AG04449 (cell line): ENCODE measurements at regions of chr14 and their contacts with region 1.

Region 1: GRCh38 chr14:71103662-71104484 is 196.6 kb downstream of the PCNX1 start:
- DNase-seq: no peak
- H3K4me3 ChIP-seq: no peak overlapping the region
- CTCF ChIP-seq: peak; percentile 66

Region 2: DNA sequence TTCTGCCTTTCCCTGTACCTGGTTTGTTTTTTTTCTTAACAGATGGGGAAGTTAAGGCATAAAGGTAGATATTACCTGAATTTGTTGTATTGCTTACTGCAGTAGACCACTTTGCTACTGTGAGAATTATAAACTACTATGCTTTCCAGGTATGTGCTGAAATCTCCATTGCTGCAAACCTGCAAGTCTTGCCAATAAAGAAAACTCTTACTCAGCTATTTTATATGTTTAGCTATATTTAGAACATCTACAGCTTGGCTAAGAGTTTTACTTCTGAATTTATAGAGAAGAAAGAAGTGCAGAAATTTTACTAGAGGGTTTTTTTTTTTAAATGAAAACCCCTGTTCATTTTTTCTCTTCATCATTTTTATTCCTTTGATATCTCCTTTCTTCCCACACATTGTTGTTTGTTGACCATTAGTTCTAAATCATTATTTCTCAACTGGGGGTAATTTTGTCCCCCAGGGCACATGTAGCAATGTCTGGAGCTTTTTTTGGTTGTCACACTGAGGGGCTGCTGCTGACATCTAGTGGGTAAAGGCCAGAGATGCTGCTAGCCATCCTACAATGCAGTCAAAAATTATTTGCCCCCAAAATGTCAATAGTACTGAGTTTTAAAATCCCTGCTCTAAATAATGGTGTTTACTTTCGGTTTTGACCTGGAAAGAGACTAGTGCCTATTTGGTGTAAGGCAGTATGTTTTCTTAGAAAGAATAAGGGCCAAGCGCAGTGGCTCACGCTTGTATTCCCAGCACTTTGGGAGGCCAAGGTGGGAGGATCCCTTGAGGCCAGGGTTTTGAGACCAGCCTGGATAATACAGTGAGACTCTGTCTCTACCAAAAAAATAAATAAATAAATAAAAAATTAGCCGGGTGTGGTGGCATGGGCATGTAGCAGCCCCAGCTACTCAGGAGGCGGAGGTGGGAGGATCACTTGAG is 148.1 kb before region 1 on chr14:
- CTCF ChIA-PET with region 1: no interaction called
- POLR2A ChIA-PET with region 1: no interaction called
- DNase-seq: no peak
- H3K4me3 ChIP-seq: no peak overlapping the region
- CTCF ChIP-seq: peak; percentile 62

Region 3: GRCh38 chr14:71089971-71090370 is 13.9 kb before region 1 on chr14:
- CTCF ChIA-PET with region 1: interaction called, 38 read pairs
- POLR2A ChIA-PET with region 1: no interaction called
- DNase-seq: peak; percentile 42
- H3K4me3 ChIP-seq: no peak overlapping the region
- CTCF ChIP-seq: no peak

Region 4: DNA sequence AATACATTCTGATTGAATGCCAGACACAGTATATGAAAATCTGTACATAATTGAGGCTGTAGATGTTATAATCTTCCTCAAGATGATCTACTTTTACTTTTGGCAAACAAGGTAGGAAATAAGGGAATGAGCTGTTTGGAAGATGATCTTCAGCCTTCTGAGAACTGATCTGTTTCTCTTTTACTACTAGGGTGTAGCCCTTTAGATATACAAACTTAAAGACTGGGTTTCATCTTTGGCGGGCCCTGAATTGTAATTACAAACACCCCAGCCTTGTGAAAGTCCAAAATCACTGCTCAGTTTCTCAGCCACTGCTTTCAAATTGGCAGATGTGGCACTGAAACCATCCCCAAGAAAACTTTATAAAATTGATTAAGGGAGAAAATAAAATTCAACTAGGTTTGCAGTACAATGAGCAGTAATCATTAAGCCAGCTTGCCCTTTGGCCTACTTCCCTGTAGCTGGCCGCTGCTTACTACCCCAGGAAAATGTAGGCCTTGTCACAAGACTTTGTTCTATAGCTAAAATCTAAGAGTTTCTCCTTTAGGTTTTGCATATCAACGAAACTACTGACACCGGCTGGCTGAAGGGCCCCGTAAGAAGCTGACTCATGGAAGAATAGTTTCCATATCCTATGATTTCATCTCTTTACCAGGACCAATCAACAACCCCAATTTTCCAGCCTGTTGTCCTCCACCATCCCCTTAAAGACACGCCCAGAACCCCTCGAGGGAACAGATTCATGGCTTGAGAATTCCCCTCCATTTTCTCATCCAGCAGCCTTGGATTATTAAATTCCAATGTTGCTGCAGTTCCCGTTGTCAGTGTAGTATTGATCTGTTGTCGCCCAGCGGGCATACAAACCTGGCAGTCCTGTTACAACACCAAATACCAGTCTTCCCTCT is 14.2 kb after region 1 on chr14:
- CTCF ChIA-PET with region 1: interaction called, 28 read pairs
- POLR2A ChIA-PET with region 1: no interaction called
- DNase-seq: peak; percentile 84
- H3K4me3 ChIP-seq: no peak overlapping the region
- CTCF ChIP-seq: no peak

Region 5: DNA sequence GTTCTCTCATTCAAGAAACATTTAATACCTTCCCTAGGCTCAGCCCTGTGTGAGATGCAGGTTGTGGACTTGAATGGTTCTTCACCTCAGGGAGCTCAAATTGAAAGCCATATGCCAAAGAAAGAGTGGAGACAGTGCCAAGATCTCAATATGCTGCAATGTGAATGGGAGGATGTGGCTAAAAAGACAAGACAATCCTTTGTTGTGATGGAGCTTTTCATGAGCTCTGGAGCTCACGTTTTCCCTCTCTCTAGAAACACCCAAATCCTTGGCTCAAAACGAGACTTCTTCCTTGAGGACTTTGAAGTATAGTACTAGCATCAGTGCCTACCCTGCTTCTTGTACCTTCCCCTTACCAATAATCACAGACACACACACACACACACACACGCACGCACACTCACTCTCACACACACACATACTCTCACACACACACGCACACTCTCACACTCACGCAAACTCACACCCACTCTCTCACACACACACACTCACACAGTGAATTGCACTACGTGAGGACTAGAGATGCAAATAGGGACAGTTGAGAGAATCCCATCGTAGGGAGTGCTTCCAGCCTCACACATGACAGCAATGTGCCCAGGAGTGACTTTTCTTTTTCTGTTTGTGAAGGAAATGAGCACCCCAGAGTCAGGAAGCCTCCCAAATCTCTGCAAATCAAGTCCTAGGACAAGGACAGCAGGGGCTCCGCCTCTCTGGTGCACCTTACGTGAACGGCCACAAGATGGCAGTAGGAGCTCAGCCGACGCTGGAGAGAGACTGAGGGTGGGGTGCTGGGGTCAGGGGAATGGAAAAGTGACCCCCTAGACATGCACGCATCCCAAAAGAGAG is 34.8 kb after region 1 on chr14:
- CTCF ChIA-PET with region 1: interaction called, 22 read pairs
- POLR2A ChIA-PET with region 1: interaction called, 3 read pairs
- DNase-seq: no peak
- H3K4me3 ChIP-seq: no peak overlapping the region
- CTCF ChIP-seq: peak; percentile 91

Region 6: DNA sequence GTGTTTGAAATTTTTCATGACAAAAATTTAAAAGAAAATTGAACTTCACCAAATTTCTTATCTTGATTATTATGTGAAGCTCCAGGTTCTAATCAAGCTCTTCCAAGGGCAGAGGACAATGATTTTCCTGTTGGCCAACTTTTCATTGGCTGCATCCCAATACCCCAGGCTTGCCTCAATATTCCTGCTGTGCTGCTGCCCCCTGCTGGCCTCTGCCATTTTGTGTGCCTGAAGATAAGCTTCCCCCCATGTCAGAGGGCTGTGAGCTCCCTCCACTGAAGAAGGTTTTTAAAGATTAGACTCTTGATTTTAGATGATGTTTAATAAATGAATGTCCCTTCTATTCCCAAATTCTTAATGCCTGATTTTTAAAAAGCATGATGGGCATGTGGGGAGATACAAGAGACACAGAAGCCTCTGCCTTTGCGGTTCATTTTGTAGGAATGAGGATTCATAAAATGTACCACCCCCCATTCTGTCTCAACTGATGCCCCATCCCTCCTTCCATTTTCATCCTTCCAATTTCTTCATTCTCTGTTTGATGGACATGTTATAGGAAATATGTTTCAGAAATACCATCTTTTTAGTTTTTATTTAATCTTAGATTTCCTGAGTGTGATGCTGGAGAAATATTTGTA is 751.6 kb after region 1 on chr14:
- CTCF ChIA-PET with region 1: interaction called, 21 read pairs
- POLR2A ChIA-PET with region 1: no interaction called
- DNase-seq: peak; percentile 4
- H3K4me3 ChIP-seq: no peak overlapping the region
- CTCF ChIP-seq: peak; percentile 83